Panc1 (cell line): ENCODE measurements at regions of chr2 and their contacts with region 1.

Region 1: DNA sequence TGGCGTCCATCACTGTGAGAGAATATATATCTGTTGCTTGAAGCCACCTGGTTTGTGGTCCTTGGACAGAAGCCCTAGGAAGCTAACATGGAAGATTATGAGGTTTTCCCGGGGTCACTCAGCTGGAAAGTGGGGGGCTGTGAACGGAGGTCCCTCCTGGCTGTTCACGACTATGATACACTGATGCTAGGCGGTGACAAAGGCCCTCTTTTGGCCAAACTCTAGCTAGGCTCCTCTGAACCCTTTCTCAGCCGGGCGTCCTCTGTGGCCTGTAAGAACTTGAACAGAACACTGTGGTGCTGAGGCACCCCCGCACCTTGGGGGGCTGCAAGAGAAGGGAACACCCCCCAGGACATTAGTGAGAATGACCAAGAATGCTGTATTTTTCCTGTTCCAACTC is 164.6 kb downstream of the TFCP2L1 start:
- DNase-seq: no peak
- ATAC-seq: no peak
- H3K4me3 ChIP-seq: no peak overlapping the region
- H3K27ac ChIP-seq: no peak overlapping the region
- H3K4me1 ChIP-seq: no peaks in the 10 kb centered on the region
- H3K27me3 ChIP-seq: peaks cover 2% of the 10 kb centered on the region; the same call in 1 of the 2 replicates
- CTCF ChIP-seq: no peak

Region 2: DNA sequence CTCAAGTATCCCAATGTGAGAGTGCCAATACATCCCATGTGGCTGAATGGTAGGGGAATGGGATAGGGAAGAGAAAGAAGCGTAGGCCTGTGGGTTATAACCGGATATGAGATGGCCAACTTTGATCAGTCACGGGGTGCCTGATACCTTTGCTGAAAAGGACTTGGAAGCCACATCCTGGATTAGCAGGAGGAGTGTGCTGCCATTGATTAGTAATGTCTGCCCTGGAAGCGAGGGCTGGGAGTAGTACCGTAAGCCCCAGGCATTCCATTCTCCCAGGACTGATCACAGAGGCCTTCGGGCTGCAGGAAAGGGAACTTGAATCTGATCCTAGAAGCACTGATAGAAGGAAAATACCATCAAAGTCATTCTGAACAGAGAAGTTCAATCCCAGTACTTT is 53.9 kb before region 1 on chr2:
- CTCF ChIA-PET with region 1: no interaction called
- POLR2A ChIA-PET with region 1: no interaction called
- in situ Hi-C with region 1: no loop called
- intact Hi-C with region 1: no loop called
- DNase-seq: no peak
- ATAC-seq: no peak
- H3K4me3 ChIP-seq: no peak overlapping the region
- H3K27ac ChIP-seq: no peak overlapping the region
- H3K4me1 ChIP-seq: no peaks in the 10 kb centered on the region; the same call in 1 of the 2 replicates
- H3K27me3 ChIP-seq: no peaks in the 10 kb centered on the region; the same call in 1 of the 2 replicates
- CTCF ChIP-seq: no peak

Region 3: DNA sequence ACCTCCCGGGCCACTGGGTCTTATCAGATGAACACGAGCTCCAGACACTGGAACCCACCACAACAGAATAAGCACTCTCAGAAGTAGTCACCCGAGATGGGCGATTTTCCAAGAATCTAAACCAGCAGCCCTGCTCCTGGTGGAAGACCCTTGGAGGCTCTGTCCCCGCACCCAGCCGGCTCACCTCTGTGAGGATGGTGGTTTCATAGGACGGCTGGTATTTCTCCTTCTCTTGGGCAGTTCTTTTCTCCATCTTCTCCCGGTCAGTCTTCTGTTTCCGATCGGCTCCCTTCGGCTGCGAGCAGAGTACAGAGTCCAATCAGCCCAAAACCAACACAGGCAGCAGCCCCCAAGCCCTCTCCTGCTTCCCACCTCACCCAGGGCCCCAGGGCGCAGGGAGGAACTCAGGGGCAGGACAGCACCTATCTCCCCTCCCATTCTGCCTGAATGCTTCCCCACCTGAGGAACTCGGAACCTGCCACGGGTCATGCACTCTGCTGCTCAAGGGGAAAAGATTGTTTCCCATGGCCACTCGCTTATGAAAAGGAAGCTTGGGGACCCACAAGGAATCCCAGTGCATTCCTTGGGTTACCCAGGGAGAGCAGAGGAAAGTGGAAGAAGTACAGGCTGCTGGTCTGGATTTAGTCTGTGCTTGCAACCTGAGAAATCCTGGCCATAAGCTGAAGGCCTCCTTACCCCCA is 121.9 kb after region 1 on chr2:
- CTCF ChIA-PET with region 1: no interaction called
- POLR2A ChIA-PET with region 1: interaction called, 12 read pairs
- in situ Hi-C with region 1: no loop called
- intact Hi-C with region 1: no loop called
- DNase-seq: no peak
- ATAC-seq: no peak
- H3K4me3 ChIP-seq: no peak overlapping the region
- H3K27ac ChIP-seq: no peak overlapping the region
- H3K4me1 ChIP-seq: no peaks in the 10 kb centered on the region
- H3K27me3 ChIP-seq: no peaks in the 10 kb centered on the region
- CTCF ChIP-seq: no peak